PC-3 (cell line): ENCODE measurements at regions of chr2 and their contacts with region 1.

Region 1: GRCh38 chr2:151627361-151627760 is 106.9 kb downstream of the NEB start:
- DNase-seq: no peak
- ATAC-seq: no peak
- H3K4me3 ChIP-seq: no peak overlapping the region
- H3K27ac ChIP-seq: no peak overlapping the region
- H3K4me1 ChIP-seq: no peaks in the 10 kb centered on the region
- H3K27me3 ChIP-seq: peaks cover 29% of the 10 kb centered on the region
- CTCF ChIP-seq: no peak

Region 2: DNA sequence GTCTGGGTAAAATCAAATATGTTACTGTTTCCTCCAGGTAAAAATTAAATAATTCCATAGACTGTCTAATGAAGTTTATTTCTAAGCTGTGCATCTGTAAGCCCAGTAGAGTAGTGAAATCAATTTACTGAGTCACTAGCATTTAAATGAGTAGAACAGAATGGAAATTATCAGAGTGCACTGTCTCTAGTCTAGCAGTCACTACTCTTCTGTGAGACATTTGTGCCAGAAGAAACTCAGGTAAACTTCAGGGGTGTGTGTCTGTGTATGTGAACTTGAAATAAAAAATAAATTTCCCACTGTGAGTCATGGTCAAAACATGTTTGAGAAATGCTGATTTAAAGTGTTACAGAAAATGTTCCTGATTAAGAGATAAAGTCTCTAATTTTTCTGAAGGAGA is 71.2 kb before region 1 on chr2:
- CTCF ChIA-PET with region 1: no interaction called
- POLR2A ChIA-PET with region 1: no interaction called
- intact Hi-C with region 1: loop called (anchors 10 kb)
- DNase-seq: no peak
- ATAC-seq: no peak
- H3K4me3 ChIP-seq: no peak overlapping the region
- H3K27ac ChIP-seq: no peak overlapping the region
- H3K4me1 ChIP-seq: no peaks in the 10 kb centered on the region
- H3K27me3 ChIP-seq: peaks cover 28% of the 10 kb centered on the region
- CTCF ChIP-seq: no peak

Region 3: GRCh38 chr2:151808258-151809072 is 181.1 kb after region 1 on chr2:
- CTCF ChIA-PET with region 1: no interaction called
- POLR2A ChIA-PET with region 1: no interaction called
- intact Hi-C with region 1: no loop called
- DNase-seq: peak; percentile 45
- ATAC-seq: peak; percentile 60
- H3K4me3 ChIP-seq: no peak overlapping the region
- H3K27ac ChIP-seq: no peak overlapping the region
- H3K4me1 ChIP-seq: no peaks in the 10 kb centered on the region
- H3K27me3 ChIP-seq: no peaks in the 10 kb centered on the region
- CTCF ChIP-seq: peak; percentile 70